ENCODE measurements at regions of chr6 and their contacts with region 1.

Region 1: GRCh38 chr6:122033539-122034181 is 365.8 kb upstream of the HSF2 start:
- DNase-seq: no peak
- H3K4me3 Mint-ChIP-seq: no peak overlapping the region
- H3K27ac Mint-ChIP-seq: no peak overlapping the region
- H3K4me1 Mint-ChIP-seq: no peaks in the 10 kb centered on the region
- H3K27me3 Mint-ChIP-seq: peaks cover 5% of the 10 kb centered on the region

Region 2: GRCh38 chr6:121436960-121437850 is 596.5 kb before region 1 on chr6:
- CTCF ChIA-PET with region 1: interaction called, 3 read pairs
- POLR2A ChIA-PET with region 1: no interaction called
- intact Hi-C with region 1: loop called (anchors 2 kb)
- DNase-seq: peak; percentile 17
- H3K4me3 Mint-ChIP-seq: peak overlapping the region; percentile 62
- H3K27ac Mint-ChIP-seq: no peak overlapping the region
- H3K4me1 Mint-ChIP-seq: peaks cover 17% of the 10 kb centered on the region
- H3K27me3 Mint-ChIP-seq: peaks cover 32% of the 10 kb centered on the region

Region 3: DNA sequence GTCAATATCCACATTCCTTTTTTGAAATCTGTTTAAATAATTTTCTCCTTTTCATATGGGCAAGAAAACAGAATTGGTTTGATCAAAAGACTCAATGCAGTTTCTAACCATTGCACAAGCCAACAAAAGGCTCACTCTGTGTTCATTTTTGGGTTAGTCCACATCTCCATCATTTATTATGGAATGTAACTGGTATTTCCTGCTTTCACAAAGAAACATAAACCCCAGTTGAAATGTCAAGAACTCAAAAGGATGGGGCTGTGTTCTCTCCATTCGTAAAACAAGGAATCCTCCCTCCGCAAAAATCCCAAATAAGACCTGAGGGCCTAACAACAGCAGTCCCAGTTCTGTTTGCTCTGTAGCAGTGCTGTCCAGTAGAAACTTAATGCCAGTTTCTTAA is 177.4 kb before region 1 on chr6:
- CTCF ChIA-PET with region 1: no interaction called
- POLR2A ChIA-PET with region 1: no interaction called
- intact Hi-C with region 1: loop called (anchors 5 kb)
- DNase-seq: no peak
- H3K4me3 Mint-ChIP-seq: no peak overlapping the region
- H3K27ac Mint-ChIP-seq: no peak overlapping the region
- H3K4me1 Mint-ChIP-seq: no peaks in the 10 kb centered on the region
- H3K27me3 Mint-ChIP-seq: no peaks in the 10 kb centered on the region

Region 4: DNA sequence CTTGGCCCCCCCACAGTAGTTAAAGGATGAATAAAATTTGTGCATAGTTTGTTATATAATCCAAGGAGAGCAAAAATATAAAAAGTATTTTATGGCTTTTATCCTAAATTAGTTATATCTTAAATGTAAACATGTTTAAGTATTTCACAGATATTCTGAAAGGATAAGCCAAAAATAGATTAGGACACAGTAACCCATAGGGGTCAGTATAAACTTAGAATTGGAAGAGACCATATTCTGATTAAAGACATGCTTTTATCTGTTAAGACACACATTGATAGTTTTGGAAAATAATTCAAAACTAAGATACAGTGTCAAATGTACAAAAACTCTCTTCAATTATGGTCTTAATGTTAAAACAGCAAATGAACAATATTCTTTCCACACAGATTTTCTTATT is 442.5 kb after region 1 on chr6:
- CTCF ChIA-PET with region 1: no interaction called
- POLR2A ChIA-PET with region 1: no interaction called
- intact Hi-C with region 1: no loop called
- DNase-seq: no peak
- H3K4me3 Mint-ChIP-seq: no peak overlapping the region
- H3K27ac Mint-ChIP-seq: no peak overlapping the region
- H3K4me1 Mint-ChIP-seq: no peaks in the 10 kb centered on the region
- H3K27me3 Mint-ChIP-seq: no peaks in the 10 kb centered on the region